Transverse colon (tissue), 4 donors: ENCODE measurements at regions of chr6 and their contacts with region 1.

Region 1: GRCh38 chr6:160132776-160133338 is 11.2 kb downstream of the SLC22A1 start:
- DNase-seq: no peak
- H3K4me3 ChIP-seq: no peak overlapping the region
- H3K27ac ChIP-seq: no peak overlapping the region
- H3K4me1 ChIP-seq: peaks cover 0 to under 1% (median 0%) of the 10 kb centered on the region in 4 donors
- H3K27me3 ChIP-seq: no peaks in the 10 kb centered on the region
- CTCF ChIP-seq: no peak
- EP300 ChIP-seq: no peak
- POLR2A ChIP-seq: no peak

Region 2: GRCh38 chr6:158207422-158207788 is 1925.5 kb before region 1 on chr6:
- in situ Hi-C with region 1: no loop called
- intact Hi-C with region 1: loop called (anchors 5 kb)
- DNase-seq: no peak
- H3K4me3 ChIP-seq: no peak overlapping the region
- H3K27ac ChIP-seq: no peak overlapping the region
- H3K4me1 ChIP-seq: no peaks in the 10 kb centered on the region
- H3K27me3 ChIP-seq: peaks cover 6% of the 10 kb centered on the region
- CTCF ChIP-seq: no peak
- EP300 ChIP-seq: no peak
- POLR2A ChIP-seq: no peak